Ovary (tissue), 10 donors: ENCODE measurements at regions of chr6 and their contacts with region 1.

Region 1: GRCh38 chr6:166382933-166383801 is at the start of gene MPC1:
- DNase-seq: peak; percentile 93 to 98 (median 96)
- H3K4me3 ChIP-seq: peak within 1 kb of the TSS; percentile 93
- H3K27ac ChIP-seq: peak within 1 kb of the TSS; percentile 53 to 91
- H3K4me1 ChIP-seq: no peaks in the 10 kb centered on the region
- H3K27me3 ChIP-seq: no peaks in the 10 kb centered on the region
- CTCF ChIP-seq: no peak
- EP300 ChIP-seq: no peak
- POLR2A ChIP-seq: peak; percentile 39
- total RNA-seq, gene MPC1: 34.1 to 46.7 (median 37.6) TPM

Region 2: GRCh38 chr6:166342349-166343149 is 40.6 kb before region 1 on chr6 and contains the start of gene SFT2D1:
- intact Hi-C with region 1: loop called in 1 of 4 experiments (anchors 5 kb)
- DNase-seq: peak; percentile 79 to 91 (median 85)
- H3K4me3 ChIP-seq: peak within 1 kb of the TSS; percentile 95
- H3K27ac ChIP-seq: peak within 1 kb of the TSS; percentile 38 to 62
- H3K4me1 ChIP-seq: peaks cover 5% of the 10 kb centered on the region
- H3K27me3 ChIP-seq: no peaks in the 10 kb centered on the region
- CTCF ChIP-seq: no peak
- EP300 ChIP-seq: no peak
- POLR2A ChIP-seq: peak; percentile 76
- total RNA-seq, gene SFT2D1: 25.9 to 50.3 (median 34.1) TPM

Region 3: DNA sequence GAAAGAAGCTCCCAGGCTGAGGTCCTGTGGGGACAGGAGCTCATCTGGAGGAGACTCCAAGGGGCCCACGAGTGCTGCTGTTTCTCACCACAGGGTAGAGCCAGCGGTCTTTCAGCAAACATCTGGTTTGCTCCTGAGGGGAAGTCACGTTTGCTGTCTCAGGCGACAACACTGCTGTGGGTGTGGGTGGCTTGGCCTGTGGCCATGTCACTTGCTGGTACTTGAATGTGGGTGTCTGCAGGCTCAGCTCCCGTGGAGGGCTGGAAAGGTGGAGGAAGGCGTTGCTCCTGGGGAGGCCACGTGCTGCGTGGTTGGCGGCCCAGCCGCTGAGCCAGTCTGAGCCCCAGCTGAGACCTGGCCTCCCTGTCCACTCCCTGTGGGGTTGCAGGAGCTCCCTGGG is 52.4 kb after region 1 on chr6:
- intact Hi-C with region 1: no loop called
- DNase-seq: no peak
- H3K4me3 ChIP-seq: no peak overlapping the region
- H3K27ac ChIP-seq: no peak overlapping the region
- H3K4me1 ChIP-seq: no peaks in the 10 kb centered on the region
- H3K27me3 ChIP-seq: no peaks in the 10 kb centered on the region
- CTCF ChIP-seq: no peak
- EP300 ChIP-seq: no peak
- POLR2A ChIP-seq: no peak